ENCODE measurements at regions of chr9 and their contacts with region 1.

Region 1: DNA sequence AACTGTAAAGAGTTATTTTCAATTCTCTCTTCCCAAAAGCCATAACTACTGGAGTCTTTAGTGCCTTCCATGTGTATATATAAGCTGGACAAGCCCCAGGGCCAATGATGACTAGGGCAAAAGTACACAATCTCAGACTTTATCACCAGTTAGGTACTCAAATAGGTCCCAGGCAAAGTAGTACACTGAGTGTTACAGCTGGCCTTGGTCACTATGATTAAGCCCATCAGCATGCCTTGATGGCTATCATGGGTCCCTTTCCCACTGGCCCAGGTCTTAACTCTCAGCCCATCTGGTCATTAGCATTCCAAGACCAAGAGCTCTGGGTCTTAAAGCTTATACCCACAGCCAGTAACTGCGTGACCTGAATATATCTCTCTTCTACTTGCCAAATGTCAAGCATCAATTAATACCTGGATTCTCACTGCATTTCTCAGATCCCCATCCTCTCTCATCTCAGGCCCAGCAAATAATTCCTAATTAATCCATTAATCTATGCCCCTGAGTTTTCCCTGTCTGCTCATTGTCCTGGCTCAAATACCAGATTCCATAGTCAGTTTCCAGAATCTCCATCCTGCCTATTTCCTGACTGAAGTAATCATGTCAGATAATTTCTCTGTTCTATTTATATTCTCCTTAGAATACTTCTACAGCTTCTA is 62.3 kb downstream of the NR6A1 start:
- DNase-seq: no peak
- ATAC-seq: no peak
- H3K4me3 ChIP-seq: no peak overlapping the region
- H3K27ac ChIP-seq: no peak overlapping the region
- H3K4me1 ChIP-seq: no peaks in the 10 kb centered on the region; the same call in 1 of the 2 replicates
- H3K27me3 ChIP-seq: no peaks in the 10 kb centered on the region
- CTCF ChIP-seq: no peak
- EP300 ChIP-seq: no peak
- POLR2A ChIP-seq: no peak
- RAD21 ChIP-seq: no peak

Region 2: DNA sequence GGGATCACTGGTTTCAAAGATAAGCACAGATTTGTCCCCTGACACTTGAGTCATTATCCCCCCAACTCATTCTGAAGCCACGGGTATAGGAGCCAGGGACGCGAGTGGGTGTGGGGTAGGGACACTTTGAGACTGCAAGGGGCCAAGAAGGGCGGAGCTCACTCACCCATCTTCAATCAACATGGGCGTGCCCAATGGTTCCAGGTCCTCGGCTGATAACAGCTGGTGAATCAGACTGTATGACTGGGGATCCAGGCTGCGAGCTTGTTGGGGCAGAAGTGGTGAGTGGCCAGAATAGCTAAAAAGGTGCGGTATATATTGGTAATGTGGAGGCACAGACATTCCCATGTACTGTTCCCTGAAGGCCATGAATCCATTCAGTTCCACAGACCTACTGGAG is 170.8 kb before region 1 on chr9:
- CTCF ChIA-PET with region 1: interaction called, 10 read pairs
- POLR2A ChIA-PET with region 1: no interaction called
- RAD21 ChIA-PET with region 1: no interaction called
- SMC1A ChIA-PET with region 1: interaction called, 4 read pairs
- in situ Hi-C with region 1: no loop called
- intact Hi-C with region 1: no loop called
- DNase-seq: no peak
- ATAC-seq: no peak
- H3K4me3 ChIP-seq: no peak overlapping the region
- H3K27ac ChIP-seq: no peak overlapping the region
- H3K4me1 ChIP-seq: no peaks in the 10 kb centered on the region
- H3K27me3 ChIP-seq: no peaks in the 10 kb centered on the region
- CTCF ChIP-seq: no peak
- EP300 ChIP-seq: no peak
- POLR2A ChIP-seq: no peak
- RAD21 ChIP-seq: no peak

Region 3: GRCh38 chr9:124629600-124629999 is 79.2 kb before region 1 on chr9:
- CTCF ChIA-PET with region 1: interaction called, 86 read pairs
- POLR2A ChIA-PET with region 1: interaction called, 4 read pairs
- RAD21 ChIA-PET with region 1: interaction called, 11 read pairs
- SMC1A ChIA-PET with region 1: interaction called, 89 read pairs
- in situ Hi-C with region 1: no loop called
- intact Hi-C with region 1: no loop called
- DNase-seq: no peak
- ATAC-seq: peak; percentile 46; the same call in 2 of the 3 replicates
- H3K4me3 ChIP-seq: no peak overlapping the region
- H3K27ac ChIP-seq: no peak overlapping the region
- H3K4me1 ChIP-seq: no peaks in the 10 kb centered on the region
- H3K27me3 ChIP-seq: no peaks in the 10 kb centered on the region
- CTCF ChIP-seq: no peak
- EP300 ChIP-seq: no peak
- POLR2A ChIP-seq: no peak
- RAD21 ChIP-seq: no peak

Region 4: DNA sequence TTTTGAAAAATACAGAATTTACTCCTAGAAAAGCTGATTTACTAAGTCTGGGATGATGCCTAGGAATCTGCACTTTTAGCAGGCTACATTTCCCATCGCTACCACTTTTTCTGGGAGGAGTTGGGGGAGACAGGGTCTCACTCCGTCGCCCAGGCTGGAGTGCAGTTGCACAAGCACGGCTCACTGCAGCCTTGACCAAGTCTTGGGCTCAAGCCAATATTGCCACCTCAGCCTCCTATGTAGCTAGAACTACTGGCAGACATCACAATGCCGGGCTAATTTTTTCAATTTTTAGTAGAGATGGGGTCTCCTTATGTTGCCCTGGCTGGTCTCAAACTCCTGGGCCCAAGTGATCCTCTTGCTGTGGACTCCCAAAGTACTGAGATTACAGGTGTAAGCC is 23.5 kb before region 1 on chr9:
- CTCF ChIA-PET with region 1: interaction called, 8 read pairs
- POLR2A ChIA-PET with region 1: interaction called, 3 read pairs
- RAD21 ChIA-PET with region 1: interaction called, 3 read pairs
- SMC1A ChIA-PET with region 1: interaction called, 11 read pairs
- in situ Hi-C with region 1: no loop called
- intact Hi-C with region 1: no loop called
- DNase-seq: no peak
- ATAC-seq: no peak
- H3K4me3 ChIP-seq: no peak overlapping the region
- H3K27ac ChIP-seq: no peak overlapping the region
- H3K4me1 ChIP-seq: peaks cover 5% of the 10 kb centered on the region
- H3K27me3 ChIP-seq: no peaks in the 10 kb centered on the region
- CTCF ChIP-seq: no peak
- EP300 ChIP-seq: no peak
- POLR2A ChIP-seq: no peak
- RAD21 ChIP-seq: no peak

Region 5: DNA sequence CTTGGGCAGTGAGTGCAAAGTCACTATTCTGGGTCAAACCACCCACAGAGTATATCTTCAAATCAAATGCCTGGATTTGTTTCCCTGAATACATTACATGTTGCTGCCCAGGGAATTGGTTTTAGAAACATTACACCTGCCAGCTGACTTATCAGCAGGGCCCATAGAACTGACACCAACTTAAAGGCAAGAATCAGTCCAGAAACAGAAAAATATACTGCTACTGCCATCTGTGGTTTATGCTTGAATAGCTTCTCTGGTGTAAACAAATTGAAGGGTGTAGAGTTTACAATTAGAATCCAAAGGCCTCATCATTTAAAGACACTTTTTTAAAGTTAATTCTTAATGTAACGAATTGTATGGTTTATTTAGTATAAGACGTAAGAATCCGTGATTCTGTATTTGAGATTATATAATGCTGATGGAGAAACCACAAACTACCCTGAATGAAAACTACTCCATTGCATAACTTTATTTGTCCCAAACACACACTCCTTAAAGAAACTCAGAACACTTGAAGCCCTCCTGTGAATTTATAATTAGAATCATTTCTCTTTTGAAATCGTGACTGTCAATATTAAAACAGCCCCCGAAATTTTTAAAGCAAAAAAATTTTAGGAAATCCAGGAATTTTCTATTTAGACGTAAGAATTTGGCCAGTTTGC is 56.1 kb after region 1 on chr9:
- CTCF ChIA-PET with region 1: interaction called, 201 read pairs
- POLR2A ChIA-PET with region 1: interaction called, 5 read pairs
- RAD21 ChIA-PET with region 1: interaction called, 59 read pairs
- SMC1A ChIA-PET with region 1: interaction called, 105 read pairs
- in situ Hi-C with region 1: no loop called
- intact Hi-C with region 1: loop called (anchors 2 kb)
- DNase-seq: no peak
- ATAC-seq: peak; percentile 81
- H3K4me3 ChIP-seq: no peak overlapping the region; the same call in 1 of the 2 replicates
- H3K27ac ChIP-seq: peak overlapping the region; percentile 28; the same call in 1 of the 2 replicates
- H3K4me1 ChIP-seq: peaks cover 9% of the 10 kb centered on the region
- H3K27me3 ChIP-seq: no peaks in the 10 kb centered on the region
- CTCF ChIP-seq: peak; percentile 33 to 62 (median 54); a peak in 5 of 6 replicates
- EP300 ChIP-seq: no peak
- POLR2A ChIP-seq: no peak
- RAD21 ChIP-seq: peak; percentile 62

Region 6: GRCh38 chr9:125374443-125375309 is 665.9 kb after region 1 on chr9:
- CTCF ChIA-PET with region 1: interaction called, 3 read pairs
- POLR2A ChIA-PET with region 1: no interaction called
- RAD21 ChIA-PET with region 1: interaction called, 5 read pairs
- SMC1A ChIA-PET with region 1: no interaction called
- in situ Hi-C with region 1: no loop called
- intact Hi-C with region 1: loop called (anchors 5 kb)
- DNase-seq: peak; percentile 16
- ATAC-seq: peak; percentile 98
- H3K4me3 ChIP-seq: no peak overlapping the region
- H3K27ac ChIP-seq: no peak overlapping the region
- H3K4me1 ChIP-seq: 0 out of 2 replicates have a peak, but pooled peaks cover 3% of the 10 kb centered on the region
- H3K27me3 ChIP-seq: peaks cover 0 to 2% of the 10 kb centered on the region in 2 experiments; a peak in 1 of 4 replicates
- CTCF ChIP-seq: peak; percentile 82 to 87 (median 83)
- EP300 ChIP-seq: no peak
- POLR2A ChIP-seq: no peak
- RAD21 ChIP-seq: peak; percentile 100

Measured in GM12878 (cell line).